ENCODE measurements at regions of chr16 and their contacts with region 1.

Region 1: GRCh38 chr16:55465077-55465896 is 13.7 kb upstream of the MMP2 start:
- DNase-seq: peak; percentile 85
- CTCF ChIP-seq: peak; percentile 100

Region 2: GRCh38 chr16:54980821-54981220 is 484.5 kb before region 1 on chr16:
- CTCF ChIA-PET with region 1: no interaction called
- POLR2A ChIA-PET with region 1: no interaction called
- DNase-seq: no peak
- CTCF ChIP-seq: no peak

Region 3: DNA sequence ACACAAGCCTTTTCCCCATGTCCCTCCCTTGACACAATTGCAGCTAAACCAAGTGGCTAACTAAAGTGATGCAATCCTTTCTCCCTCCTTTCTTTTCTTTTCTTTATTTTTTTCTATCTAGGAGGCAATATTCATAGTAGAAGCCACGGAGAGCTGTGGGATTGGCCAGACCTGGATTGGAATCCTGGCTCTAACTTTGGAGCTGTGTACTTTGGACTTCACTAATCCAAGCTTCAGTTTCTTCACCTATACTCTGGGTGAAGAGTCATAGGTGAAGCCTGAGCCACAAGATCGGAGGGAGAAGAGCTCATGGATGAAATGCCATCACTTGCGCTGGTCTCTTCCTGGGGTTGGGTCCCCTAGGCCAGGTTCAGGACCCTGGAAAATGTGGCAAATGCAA is 357.4 kb before region 1 on chr16:
- CTCF ChIA-PET with region 1: no interaction called
- POLR2A ChIA-PET with region 1: no interaction called
- DNase-seq: no peak
- CTCF ChIP-seq: no peak

Region 4: GRCh38 chr16:55294931-55295342 is 170.3 kb before region 1 on chr16:
- CTCF ChIA-PET with region 1: no interaction called
- POLR2A ChIA-PET with region 1: no interaction called
- DNase-seq: no peak
- CTCF ChIP-seq: no peak

Region 5: DNA sequence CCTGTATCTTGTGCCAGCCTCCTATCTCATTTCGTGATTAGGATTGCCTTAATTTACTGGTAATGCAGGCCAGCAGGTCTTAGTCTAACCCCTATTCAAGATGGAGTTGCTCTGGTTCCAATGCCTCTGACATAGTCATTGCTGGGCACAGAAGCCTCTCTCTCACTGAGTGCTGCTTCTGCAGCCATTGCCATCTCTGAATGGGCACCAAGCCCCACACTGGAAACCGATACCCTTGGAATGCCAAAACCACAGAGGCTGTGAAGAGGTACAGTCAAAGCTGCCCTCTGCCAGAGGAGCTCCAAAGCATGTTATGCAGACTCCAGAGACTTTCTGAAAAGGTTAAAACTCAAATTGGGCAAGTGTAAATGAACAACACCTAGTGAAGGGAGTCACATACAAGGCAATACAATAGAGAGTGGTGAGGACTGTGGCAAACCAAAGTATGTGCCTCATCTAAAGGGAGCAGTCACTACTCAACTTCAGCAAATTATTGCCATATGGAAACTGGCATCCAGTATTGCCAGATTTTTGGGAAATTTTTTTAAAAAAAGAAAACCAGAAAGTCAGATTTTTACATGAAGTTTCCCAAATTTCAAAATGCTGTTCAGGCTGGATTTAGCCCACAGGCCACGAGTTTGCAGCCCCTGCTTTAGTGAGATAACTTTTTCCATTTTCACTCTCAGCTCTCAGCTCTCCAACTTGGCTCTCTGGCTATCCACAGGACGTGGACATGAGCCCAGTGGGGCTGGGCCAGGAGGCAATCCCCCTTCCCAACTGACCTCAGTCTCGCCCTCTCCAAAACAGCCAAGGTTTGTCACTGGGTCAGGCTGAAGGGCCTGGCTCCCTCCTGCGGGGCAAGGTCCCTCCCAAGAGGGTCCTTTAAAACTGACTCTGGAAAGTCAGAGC is 11.6 kb after region 1 on chr16:
- CTCF ChIA-PET with region 1: interaction called, 48 read pairs
- POLR2A ChIA-PET with region 1: no interaction called
- DNase-seq: no peak
- CTCF ChIP-seq: no peak

Region 6: GRCh38 chr16:55513616-55514015 is 48.3 kb after region 1 on chr16:
- CTCF ChIA-PET with region 1: interaction called, 16 read pairs
- POLR2A ChIA-PET with region 1: no interaction called
- DNase-seq: no peak
- CTCF ChIP-seq: no peak

Region 7: GRCh38 chr16:55695595-55695994 is 230.3 kb after region 1 on chr16:
- CTCF ChIA-PET with region 1: interaction called, 176 read pairs
- POLR2A ChIA-PET with region 1: no interaction called
- DNase-seq: no peak
- CTCF ChIP-seq: no peak

Region 8: DNA sequence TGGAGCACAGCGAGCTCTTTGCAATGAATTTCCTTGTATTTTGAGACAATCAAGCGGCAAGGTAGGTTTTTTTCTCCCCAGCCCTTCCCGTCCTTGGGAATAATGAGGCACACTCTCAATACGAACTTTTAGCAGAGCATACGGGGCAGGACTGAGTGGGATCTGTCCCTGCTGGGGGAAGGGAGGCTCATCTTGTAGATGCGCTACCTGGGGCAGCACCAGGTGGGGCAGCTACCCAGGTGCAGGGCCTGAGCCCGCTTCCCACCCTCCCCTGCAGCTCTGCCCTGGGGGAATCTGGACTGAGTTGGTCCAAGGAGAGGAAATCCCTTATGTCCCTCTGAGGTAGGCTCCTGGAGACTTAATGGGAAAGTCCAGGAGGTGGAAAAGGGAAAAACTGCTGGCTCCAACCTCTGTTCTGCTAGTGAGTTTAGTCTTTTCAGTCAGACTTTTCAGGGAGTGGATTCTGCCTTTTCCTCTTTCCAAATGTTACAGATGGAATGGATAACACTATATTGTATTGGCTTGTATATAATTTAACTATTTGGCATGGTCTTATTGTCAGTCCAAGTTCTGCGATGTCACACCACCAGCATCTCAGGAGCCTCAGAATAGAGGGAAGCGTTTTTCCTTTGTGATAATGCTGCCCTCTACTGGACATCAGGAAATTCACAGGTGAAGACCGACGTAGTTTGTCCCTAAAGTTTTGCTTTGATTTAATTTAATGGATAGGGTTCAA is 377.2 kb after region 1 on chr16:
- CTCF ChIA-PET with region 1: interaction called, 19 read pairs
- POLR2A ChIA-PET with region 1: no interaction called
- DNase-seq: peak; percentile 65
- CTCF ChIP-seq: peak; percentile 58

Measured in GM10248 (cell line).